Activated CD4-positive, alpha-beta T cell treated with anti-CD3 and anti-CD28 coated beads, Interleukin-2, amount 10 ng/mL, durations not matched to agents 7 days and 5 days (primary cell): ENCODE measurements at regions of chr7 and their contacts with region 1.

Region 1: GRCh38 chr7:43582503-43583423 is at the start of gene STK17A:
- DNase-seq: peak; percentile 93
- H3K4me3 Mint-ChIP-seq: peak within 1 kb of the TSS; percentile 96
- H3K27ac Mint-ChIP-seq: peak within 1 kb of the TSS; percentile 99
- H3K4me1 Mint-ChIP-seq: peaks cover 31% of the 10 kb centered on the region
- H3K27me3 Mint-ChIP-seq: peaks cover 15% of the 10 kb centered on the region
- total RNA-seq, gene STK17A: 74.4 to 74.8 TPM

Region 2: DNA sequence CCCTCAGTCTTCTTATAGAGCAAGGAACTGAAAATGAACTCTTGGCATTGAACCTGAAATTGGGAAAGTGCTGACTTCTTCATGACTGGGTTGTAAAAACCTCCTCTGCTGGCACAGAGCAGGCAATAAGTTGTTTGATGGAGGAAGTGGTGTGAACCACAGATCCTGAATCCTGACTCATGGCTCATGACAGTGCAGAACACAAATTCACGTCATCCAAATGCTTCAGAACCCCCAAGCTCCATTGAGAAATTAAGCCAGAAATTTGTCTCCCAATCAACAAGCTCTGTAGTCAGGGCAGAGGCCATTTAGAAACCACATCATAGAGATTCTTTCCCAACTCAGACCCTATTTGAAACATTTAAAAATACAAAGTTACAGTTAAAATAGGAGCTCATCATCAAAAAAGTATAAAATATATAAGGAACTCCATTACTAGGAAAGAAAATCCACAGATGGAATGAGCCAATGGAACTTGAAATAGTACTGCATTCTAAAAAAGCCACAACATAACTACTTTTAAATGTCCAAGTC is 10.2 kb before region 1 on chr7:
- CTCF ChIA-PET with region 1: interaction called, 92 read pairs
- POLR2A ChIA-PET with region 1: no interaction called
- DNase-seq: peak; percentile 50
- H3K4me3 Mint-ChIP-seq: no peak overlapping the region
- H3K27ac Mint-ChIP-seq: peak overlapping the region; percentile 10
- H3K4me1 Mint-ChIP-seq: peaks cover 23% of the 10 kb centered on the region
- H3K27me3 Mint-ChIP-seq: peaks cover 6% of the 10 kb centered on the region

Region 3: GRCh38 chr7:43625453-43625852 is 42.7 kb after region 1 on chr7:
- CTCF ChIA-PET with region 1: interaction called, 29 read pairs
- POLR2A ChIA-PET with region 1: no interaction called
- DNase-seq: peak; percentile 47
- H3K4me3 Mint-ChIP-seq: no peak overlapping the region
- H3K27ac Mint-ChIP-seq: peak overlapping the region; percentile 81
- H3K4me1 Mint-ChIP-seq: peaks cover 85% of the 10 kb centered on the region
- H3K27me3 Mint-ChIP-seq: no peaks in the 10 kb centered on the region

Region 4: DNA sequence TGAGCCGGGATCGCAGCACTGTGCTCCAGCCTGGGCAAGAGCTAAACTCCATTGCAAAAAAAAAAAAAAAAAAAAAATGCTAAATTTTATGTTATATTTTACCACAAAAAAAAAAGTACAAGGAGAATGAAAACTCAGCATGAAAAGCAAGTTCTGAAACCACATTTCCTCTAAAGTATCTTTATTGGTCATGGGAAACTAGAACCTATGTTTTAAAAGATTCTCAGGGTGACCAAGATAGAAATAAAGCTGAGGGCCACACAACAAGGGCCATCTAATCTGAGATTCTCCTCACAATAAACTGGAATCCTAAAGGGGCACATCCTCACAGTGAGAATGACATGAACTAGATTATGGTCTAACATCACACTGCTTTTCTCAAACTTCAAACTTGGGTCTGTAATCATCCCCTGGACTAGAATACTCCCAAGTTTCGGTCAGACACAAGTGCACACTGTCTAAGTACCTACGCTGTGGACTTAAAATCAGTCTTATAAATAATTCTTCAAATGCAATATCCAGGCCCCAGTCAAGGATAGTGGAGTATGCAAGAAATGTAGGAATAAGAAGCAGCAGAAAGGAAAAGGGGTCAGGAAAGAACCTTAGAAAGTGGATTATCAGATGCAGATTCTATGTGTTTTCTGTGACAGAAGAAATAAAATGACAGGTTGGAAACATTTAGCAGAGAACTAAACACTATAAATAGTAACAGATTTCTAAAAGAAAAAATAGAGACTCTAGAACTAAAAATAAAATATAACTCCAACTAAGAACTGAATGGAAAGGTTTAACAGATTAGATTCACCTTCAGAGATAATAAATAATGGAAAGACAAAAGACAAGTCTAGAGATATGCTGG is 96.7 kb after region 1 on chr7:
- CTCF ChIA-PET with region 1: interaction called, 19 read pairs
- POLR2A ChIA-PET with region 1: no interaction called
- DNase-seq: no peak
- H3K4me3 Mint-ChIP-seq: no peak overlapping the region
- H3K27ac Mint-ChIP-seq: no peak overlapping the region
- H3K4me1 Mint-ChIP-seq: peaks cover 50% of the 10 kb centered on the region
- H3K27me3 Mint-ChIP-seq: no peaks in the 10 kb centered on the region

Region 5: DNA sequence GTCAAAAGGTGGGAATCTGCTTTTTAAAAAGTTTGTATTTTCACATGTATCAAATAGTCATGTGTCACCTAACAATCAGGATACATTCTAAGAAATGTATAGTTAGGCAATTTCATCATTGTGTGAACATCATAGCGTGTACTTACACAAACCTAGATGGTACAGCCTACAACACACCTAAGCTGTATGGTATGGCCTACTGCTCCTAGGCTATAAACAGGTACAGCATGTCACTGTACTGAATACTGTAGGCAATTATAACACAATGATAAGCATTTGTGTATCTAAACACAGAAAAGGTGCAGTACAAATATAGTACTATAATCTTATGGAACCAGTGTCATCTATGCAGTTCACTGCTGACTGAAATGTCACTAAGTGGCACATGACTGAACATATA is 128.7 kb after region 1 on chr7:
- CTCF ChIA-PET with region 1: interaction called, 33 read pairs
- POLR2A ChIA-PET with region 1: no interaction called
- DNase-seq: no peak
- H3K4me3 Mint-ChIP-seq: no peak overlapping the region
- H3K27ac Mint-ChIP-seq: no peak overlapping the region
- H3K4me1 Mint-ChIP-seq: peaks cover 10% of the 10 kb centered on the region
- H3K27me3 Mint-ChIP-seq: no peaks in the 10 kb centered on the region

Region 6: DNA sequence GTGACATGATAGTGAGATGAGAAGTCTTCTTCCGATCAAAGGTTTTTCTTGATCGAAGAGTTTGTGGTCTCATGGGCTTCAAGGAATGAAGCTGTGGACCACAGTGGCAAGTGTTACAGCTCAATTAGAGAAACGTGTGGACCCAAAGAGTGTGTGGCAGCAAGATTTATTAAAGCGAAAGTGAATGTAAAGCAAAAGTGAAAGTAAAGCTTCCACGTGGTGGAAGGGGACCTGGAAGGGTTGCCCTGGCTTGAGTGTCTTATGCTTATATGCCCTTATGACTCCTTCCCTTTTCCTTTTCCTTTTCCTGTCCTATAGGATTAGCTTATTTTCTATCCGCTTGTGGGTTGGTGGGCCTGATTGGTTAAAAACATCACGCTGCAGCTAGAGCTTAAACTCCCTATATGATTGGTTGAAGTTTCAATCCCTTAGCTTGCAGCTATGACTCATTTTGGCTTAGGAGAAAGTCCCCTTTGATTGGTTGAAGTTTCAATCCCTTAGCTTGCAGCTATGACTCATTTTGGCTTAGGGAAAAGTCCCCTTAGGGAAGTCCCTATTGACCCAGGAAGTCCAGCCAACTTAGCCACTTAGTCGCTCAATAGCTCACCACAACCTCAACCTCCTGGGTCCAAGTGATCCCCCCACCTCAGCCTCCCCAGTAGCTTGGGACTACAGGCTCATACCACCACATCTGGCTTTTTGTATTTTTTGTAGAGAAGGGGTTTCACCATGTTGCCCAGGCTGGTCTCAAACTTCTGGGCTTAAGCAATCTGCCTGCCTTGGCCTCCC is 251.9 kb after region 1 on chr7:
- CTCF ChIA-PET with region 1: interaction called, 30 read pairs
- POLR2A ChIA-PET with region 1: no interaction called
- DNase-seq: peak; percentile 56
- H3K4me3 Mint-ChIP-seq: peak overlapping the region; percentile 65
- H3K27ac Mint-ChIP-seq: peak overlapping the region; percentile 88
- H3K4me1 Mint-ChIP-seq: peaks cover 22% of the 10 kb centered on the region
- H3K27me3 Mint-ChIP-seq: peaks cover 5% of the 10 kb centered on the region

Region 7: DNA sequence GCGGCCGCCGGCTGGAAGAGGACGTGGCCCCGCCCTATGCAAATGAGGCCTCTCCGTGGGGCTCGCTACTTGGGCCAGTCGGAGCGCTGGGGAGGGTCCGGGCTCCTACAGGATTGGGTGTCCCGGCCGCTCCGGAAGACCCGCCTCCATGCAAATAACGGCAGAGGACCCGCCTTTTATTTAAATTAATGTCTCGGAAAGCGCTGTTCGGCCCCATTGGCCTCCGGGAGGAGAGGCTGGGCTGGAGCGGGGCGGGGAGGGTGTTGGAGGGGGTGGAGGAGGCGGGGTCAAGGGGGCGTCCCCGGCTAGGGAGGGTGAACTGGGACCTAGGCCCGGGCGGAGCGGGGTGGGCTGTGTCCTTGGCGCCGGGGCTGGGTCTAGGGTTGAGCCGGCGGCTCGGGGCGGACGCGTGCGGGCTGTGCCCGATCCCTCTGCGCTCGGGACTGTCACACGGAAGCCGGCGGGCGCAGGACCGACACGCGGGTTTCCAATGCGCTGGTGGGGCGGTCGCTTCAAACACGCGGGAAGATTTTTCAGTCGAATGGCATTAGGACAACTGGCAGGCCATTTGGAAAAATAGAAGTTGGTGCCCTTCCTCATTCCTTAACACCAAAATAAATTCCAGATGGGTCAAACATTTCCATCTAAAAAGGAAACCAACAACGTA is 499.9 kb after region 1 on chr7:
- CTCF ChIA-PET with region 1: no interaction called
- POLR2A ChIA-PET with region 1: no interaction called
- DNase-seq: peak; percentile 99
- H3K4me3 Mint-ChIP-seq: peak overlapping the region; percentile 86
- H3K27ac Mint-ChIP-seq: peak overlapping the region; percentile 83
- H3K4me1 Mint-ChIP-seq: peaks cover 34% of the 10 kb centered on the region
- H3K27me3 Mint-ChIP-seq: no peaks in the 10 kb centered on the region